Aorta (tissue), 5 donors: ENCODE measurements at regions of chr17 and their contacts with region 1.

Region 1: DNA sequence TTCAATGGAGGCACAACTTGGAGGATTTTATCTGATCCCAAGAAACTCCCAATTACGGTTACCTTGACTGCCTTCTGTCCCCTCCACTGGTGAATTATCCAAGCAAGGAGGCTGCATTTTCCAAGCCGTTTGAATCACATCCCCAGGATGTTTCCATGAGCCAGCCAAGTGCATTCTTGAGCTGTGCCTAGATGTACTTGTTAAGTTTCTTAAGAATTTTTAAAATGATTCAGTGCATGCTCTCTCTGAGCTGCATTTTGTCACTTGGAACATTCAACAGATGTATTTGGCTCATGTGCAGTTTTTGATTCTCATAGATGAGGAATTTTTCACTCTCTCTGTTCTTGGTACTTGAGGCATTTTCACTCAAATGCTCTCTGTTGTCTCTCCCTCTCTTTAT is 202.6 kb upstream of the MYOCD start:
- DNase-seq: no peak
- ATAC-seq: peak; percentile 48
- H3K4me3 ChIP-seq: no peak overlapping the region
- H3K27ac ChIP-seq: peak overlapping the region; percentile 67 to 71
- H3K4me1 ChIP-seq: no peaks in the 10 kb centered on the region
- H3K27me3 ChIP-seq: no peaks in the 10 kb centered on the region

Region 2: GRCh38 chr17:12256380-12256995 is 206.6 kb before region 1 on chr17:
- intact Hi-C with region 1: loop called in 1 of 2 experiments (anchors 5 kb)
- DNase-seq: no peak
- ATAC-seq: peak; percentile 77
- H3K4me3 ChIP-seq: peak overlapping the region; percentile 23 to 35
- H3K27ac ChIP-seq: no peak overlapping the region
- H3K4me1 ChIP-seq: no peaks in the 10 kb centered on the region
- H3K27me3 ChIP-seq: no peaks in the 10 kb centered on the region